ENCODE measurements at regions of chr1 and their contacts with region 1.

Region 1: DNA sequence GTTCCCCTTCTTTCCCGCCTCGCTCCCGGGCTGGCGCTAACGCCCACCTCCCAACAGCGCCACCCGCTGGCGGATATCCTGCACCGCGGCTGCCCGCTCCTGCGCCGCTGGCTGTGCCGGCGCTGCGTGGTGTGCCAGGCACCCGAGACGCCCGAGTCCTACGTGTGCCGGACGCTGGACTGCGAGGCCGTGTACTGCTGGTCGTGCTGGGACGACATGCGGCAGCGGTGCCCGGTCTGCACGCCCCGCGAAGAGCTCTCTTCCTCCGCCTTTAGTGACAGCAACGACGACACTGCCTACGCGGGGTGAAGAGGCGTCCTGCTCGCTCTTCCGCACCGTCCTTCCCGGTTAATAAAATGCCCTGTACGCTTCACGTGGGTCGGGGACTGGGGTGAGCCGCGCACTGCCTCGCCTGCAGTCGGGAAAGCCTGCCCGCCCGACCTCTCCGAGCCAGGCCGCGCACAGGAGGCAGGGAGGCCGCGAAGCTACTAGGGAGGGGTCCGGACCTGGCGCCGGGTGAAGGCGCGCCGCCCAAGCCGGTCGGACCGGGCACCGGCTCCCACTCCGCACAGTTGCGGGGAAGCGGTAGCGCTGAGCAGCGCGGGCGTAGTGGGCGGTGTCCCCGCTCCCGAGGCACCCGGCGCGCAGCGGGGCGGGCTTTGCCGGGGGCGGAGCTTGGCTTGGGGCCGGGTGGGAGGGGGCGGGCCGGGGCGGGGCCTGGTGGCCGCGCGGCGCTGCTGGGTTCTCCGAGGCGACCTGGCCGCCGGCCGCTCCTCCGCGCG is at the start of gene ADAM15:
- DNase-seq: peak; percentile 84
- H3K4me3 Mint-ChIP-seq: peak within 1 kb of the TSS; percentile 90
- H3K27ac Mint-ChIP-seq: peak within 1 kb of the TSS; percentile 80
- H3K4me1 Mint-ChIP-seq: peaks cover 33% of the 10 kb centered on the region
- H3K27me3 Mint-ChIP-seq: no peaks in the 10 kb centered on the region
- CTCF ChIP-seq: peak; percentile 99
- total RNA-seq, gene ADAM15: 385 and 456 TPM in 2 replicates

Region 2: GRCh38 chr1:154961497-154962262 is 89.1 kb before region 1 on chr1 and contains the start of gene PYGO2:
- CTCF ChIA-PET with region 1: interaction called, 10 read pairs
- POLR2A ChIA-PET with region 1: interaction called, 10 read pairs
- intact Hi-C with region 1: loop called (anchors 2 kb)
- DNase-seq: peak; percentile 85
- H3K4me3 Mint-ChIP-seq: peak within 1 kb of the TSS; percentile 73
- H3K27ac Mint-ChIP-seq: peak within 1 kb of the TSS; percentile 33
- H3K4me1 Mint-ChIP-seq: peaks cover 39% of the 10 kb centered on the region
- H3K27me3 Mint-ChIP-seq: no peaks in the 10 kb centered on the region
- CTCF ChIP-seq: peak; percentile 81
- total RNA-seq, gene PYGO2: 32.1 and 35.9 TPM in 2 replicates

Region 3: GRCh38 chr1:155001675-155002463 is 48.9 kb before region 1 on chr1:
- CTCF ChIA-PET with region 1: interaction called, 20 read pairs
- POLR2A ChIA-PET with region 1: interaction called, 51 read pairs
- intact Hi-C with region 1: loop called (anchors 1 kb)
- DNase-seq: peak; percentile 100
- H3K4me3 Mint-ChIP-seq: peak overlapping the region; percentile 90
- H3K27ac Mint-ChIP-seq: peak overlapping the region; percentile 97
- H3K4me1 Mint-ChIP-seq: peaks cover 52% of the 10 kb centered on the region
- H3K27me3 Mint-ChIP-seq: no peaks in the 10 kb centered on the region
- CTCF ChIP-seq: peak; percentile 34

Region 4: GRCh38 chr1:155038602-155039307 is 12.0 kb before region 1 on chr1:
- CTCF ChIA-PET with region 1: interaction called, 85 read pairs
- POLR2A ChIA-PET with region 1: interaction called, 67 read pairs
- intact Hi-C with region 1: no loop called
- DNase-seq: peak; percentile 97
- H3K4me3 Mint-ChIP-seq: peak overlapping the region; percentile 15
- H3K27ac Mint-ChIP-seq: peak overlapping the region; percentile 79
- H3K4me1 Mint-ChIP-seq: peaks cover 37% of the 10 kb centered on the region
- H3K27me3 Mint-ChIP-seq: no peaks in the 10 kb centered on the region
- CTCF ChIP-seq: no peak

Region 5: GRCh38 chr1:155078469-155079209 is 27.9 kb after region 1 on chr1 and contains the start of gene EFNA3:
- CTCF ChIA-PET with region 1: interaction called, 71 read pairs
- POLR2A ChIA-PET with region 1: interaction called, 15 read pairs
- intact Hi-C with region 1: no loop called
- DNase-seq: peak; percentile 75
- H3K4me3 Mint-ChIP-seq: peak within 1 kb of the TSS; percentile 77
- H3K27ac Mint-ChIP-seq: peak within 1 kb of the TSS; percentile 57
- H3K4me1 Mint-ChIP-seq: peaks cover 37% of the 10 kb centered on the region
- H3K27me3 Mint-ChIP-seq: peaks cover 30% of the 10 kb centered on the region
- CTCF ChIP-seq: no peak
- total RNA-seq, gene EFNA3: 1.6 and 1.7 TPM in 2 replicates

Region 6: GRCh38 chr1:155244368-155245162 is 193.8 kb after region 1 on chr1:
- CTCF ChIA-PET with region 1: no interaction called
- POLR2A ChIA-PET with region 1: no interaction called
- intact Hi-C with region 1: no loop called
- DNase-seq: peak; percentile 100
- H3K4me3 Mint-ChIP-seq: peak overlapping the region; percentile 70
- H3K27ac Mint-ChIP-seq: peak overlapping the region; percentile 29
- H3K4me1 Mint-ChIP-seq: peaks cover 24% of the 10 kb centered on the region
- H3K27me3 Mint-ChIP-seq: no peaks in the 10 kb centered on the region
- CTCF ChIP-seq: peak; percentile 38

Region 7: DNA sequence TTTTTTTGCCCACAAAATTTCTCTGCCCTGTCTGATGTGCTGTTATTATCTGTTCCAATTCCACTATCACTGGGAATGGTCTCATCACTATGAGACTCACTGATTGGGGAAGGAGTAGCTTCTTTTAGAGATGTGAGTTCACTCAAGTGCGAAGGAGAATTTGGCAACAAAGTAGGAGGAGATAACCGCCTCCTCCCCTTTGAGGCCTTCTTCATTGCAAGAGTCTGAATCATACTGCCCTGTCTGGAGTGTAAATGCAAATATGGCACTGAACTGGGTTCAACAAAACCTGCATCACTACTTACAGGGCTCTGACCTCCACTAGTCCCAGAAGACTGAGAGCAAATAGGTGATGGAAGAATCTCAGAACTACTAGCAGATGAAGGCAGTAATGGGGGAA is 428.5 kb after region 1 on chr1:
- CTCF ChIA-PET with region 1: no interaction called
- POLR2A ChIA-PET with region 1: no interaction called
- intact Hi-C with region 1: no loop called
- DNase-seq: peak; percentile 50
- H3K4me3 Mint-ChIP-seq: no peak overlapping the region
- H3K27ac Mint-ChIP-seq: no peak overlapping the region
- H3K4me1 Mint-ChIP-seq: peaks cover 17% of the 10 kb centered on the region
- H3K27me3 Mint-ChIP-seq: no peaks in the 10 kb centered on the region
- CTCF ChIP-seq: no peak

Measured in MCF 10A (cell line).